ENCODE measurements at regions of chr15 and their contacts with region 1.

Region 1: GRCh38 chr15:88401996-88402656 is 65.1 kb downstream of the MRPL46 start:
- DNase-seq: peak; percentile 67
- ATAC-seq: peak; percentile 79
- H3K4me3 Mint-ChIP-seq: no peak overlapping the region
- H3K27ac Mint-ChIP-seq: no peak overlapping the region
- H3K4me1 Mint-ChIP-seq: peaks cover 11% of the 10 kb centered on the region
- H3K27me3 Mint-ChIP-seq: peaks cover 1% of the 10 kb centered on the region
- CTCF ChIP-seq: no peak

Region 2: DNA sequence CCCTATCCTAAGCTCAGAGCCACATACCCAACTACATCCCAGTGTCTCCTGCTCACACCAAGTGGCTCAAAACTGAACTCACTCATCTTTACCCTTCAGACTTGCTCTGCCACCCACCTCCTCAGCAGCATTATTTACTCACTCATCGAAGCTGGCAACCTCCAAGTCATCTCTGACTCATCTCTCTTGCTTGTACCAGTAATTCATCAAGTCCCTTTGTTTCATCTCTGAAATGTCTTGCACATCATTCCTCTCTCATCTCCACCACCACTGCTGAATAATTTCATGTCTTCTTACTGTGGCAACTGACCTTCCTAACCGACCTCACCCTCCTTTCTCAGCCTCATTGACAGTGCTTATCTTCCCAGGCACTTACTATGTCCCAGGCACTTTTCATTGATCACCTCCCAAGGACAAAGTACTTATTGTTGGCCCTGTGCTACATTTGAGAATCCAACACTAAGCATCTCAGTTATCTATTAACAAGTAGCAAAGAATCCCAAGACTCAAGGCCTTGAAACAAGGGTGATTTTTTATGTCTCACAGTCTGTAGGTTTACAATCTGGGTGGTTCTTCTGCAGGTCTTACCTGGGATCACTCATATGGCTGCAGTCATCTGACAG is 16.9 kb before region 1 on chr15:
- CTCF ChIA-PET with region 1: interaction called, 5 read pairs
- POLR2A ChIA-PET with region 1: no interaction called
- intact Hi-C with region 1: loop called (anchors 2 kb)
- DNase-seq: peak; percentile 19
- ATAC-seq: peak; percentile 77
- H3K4me3 Mint-ChIP-seq: no peak overlapping the region
- H3K27ac Mint-ChIP-seq: no peak overlapping the region
- H3K4me1 Mint-ChIP-seq: peaks cover 6% of the 10 kb centered on the region
- H3K27me3 Mint-ChIP-seq: peaks cover 6% of the 10 kb centered on the region
- CTCF ChIP-seq: no peak

Measured in activated CD8-positive, alpha-beta T cell treated with anti-CD3 and anti-CD28 coated beads for 36 hours (primary cell).